WTC11 (cell line): ENCODE measurements at regions of chr1 and their contacts with region 1.

Region 1: GRCh38 chr1:219990782-219991510 is 55.4 kb downstream of the EPRS1 start:
- DNase-seq: no peak
- ATAC-seq: peak; percentile 52
- H3K4me3 Mint-ChIP-seq: no peak overlapping the region
- H3K27ac Mint-ChIP-seq: peak overlapping the region; percentile 38; the same call in 1 of the 2 replicates
- H3K4me1 Mint-ChIP-seq: no peaks in the 10 kb centered on the region
- H3K27me3 Mint-ChIP-seq: no peaks in the 10 kb centered on the region
- CTCF ChIP-seq: peak; percentile 23; the same call in 1 of the 2 replicates

Region 2: DNA sequence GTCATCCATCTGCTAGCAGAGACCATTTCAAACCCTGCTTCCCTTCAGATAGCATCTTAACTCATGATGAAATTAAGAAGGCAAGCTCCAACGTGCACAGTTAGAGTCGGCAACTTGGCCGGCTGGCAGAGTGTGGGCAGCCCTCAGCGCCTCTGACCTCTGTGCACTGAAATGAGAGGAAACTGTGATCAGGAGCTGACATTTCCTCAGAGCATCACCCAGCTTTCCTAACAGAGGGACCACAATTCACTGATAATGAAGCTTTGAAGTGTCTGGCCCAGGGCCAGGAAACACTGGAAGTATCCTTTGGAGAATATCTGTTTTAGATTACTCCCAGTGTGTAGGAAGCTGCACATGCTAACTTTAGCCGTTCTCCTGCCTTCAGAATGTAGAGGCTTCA is 233.1 kb before region 1 on chr1:
- CTCF ChIA-PET with region 1: no interaction called
- POLR2A ChIA-PET with region 1: no interaction called
- DNase-seq: no peak
- ATAC-seq: no peak
- H3K4me3 Mint-ChIP-seq: no peak overlapping the region
- H3K27ac Mint-ChIP-seq: no peak overlapping the region
- H3K4me1 Mint-ChIP-seq: no peaks in the 10 kb centered on the region; the same call in 1 of the 2 replicates
- H3K27me3 Mint-ChIP-seq: no peaks in the 10 kb centered on the region
- CTCF ChIP-seq: no peak

Region 3: GRCh38 chr1:219973213-219973612 is 17.7 kb before region 1 on chr1:
- CTCF ChIA-PET with region 1: interaction called, 13 read pairs
- POLR2A ChIA-PET with region 1: no interaction called
- DNase-seq: no peak
- ATAC-seq: no peak
- H3K4me3 Mint-ChIP-seq: no peak overlapping the region
- H3K27ac Mint-ChIP-seq: no peak overlapping the region
- H3K4me1 Mint-ChIP-seq: no peaks in the 10 kb centered on the region
- H3K27me3 Mint-ChIP-seq: no peaks in the 10 kb centered on the region
- CTCF ChIP-seq: no peak

Region 4: GRCh38 chr1:220123889-220124288 is 132.9 kb after region 1 on chr1:
- CTCF ChIA-PET with region 1: interaction called, 11 read pairs
- POLR2A ChIA-PET with region 1: no interaction called
- DNase-seq: peak; percentile 26
- ATAC-seq: no peak
- H3K4me3 Mint-ChIP-seq: no peak overlapping the region
- H3K27ac Mint-ChIP-seq: no peak overlapping the region
- H3K4me1 Mint-ChIP-seq: 0 out of 2 replicates have a peak, but pooled peaks cover 5% of the 10 kb centered on the region
- H3K27me3 Mint-ChIP-seq: no peaks in the 10 kb centered on the region
- CTCF ChIP-seq: no peak